Sigmoid colon (tissue), 7 donors: ENCODE measurements at regions of chr2 and their contacts with region 1.

Region 1: DNA sequence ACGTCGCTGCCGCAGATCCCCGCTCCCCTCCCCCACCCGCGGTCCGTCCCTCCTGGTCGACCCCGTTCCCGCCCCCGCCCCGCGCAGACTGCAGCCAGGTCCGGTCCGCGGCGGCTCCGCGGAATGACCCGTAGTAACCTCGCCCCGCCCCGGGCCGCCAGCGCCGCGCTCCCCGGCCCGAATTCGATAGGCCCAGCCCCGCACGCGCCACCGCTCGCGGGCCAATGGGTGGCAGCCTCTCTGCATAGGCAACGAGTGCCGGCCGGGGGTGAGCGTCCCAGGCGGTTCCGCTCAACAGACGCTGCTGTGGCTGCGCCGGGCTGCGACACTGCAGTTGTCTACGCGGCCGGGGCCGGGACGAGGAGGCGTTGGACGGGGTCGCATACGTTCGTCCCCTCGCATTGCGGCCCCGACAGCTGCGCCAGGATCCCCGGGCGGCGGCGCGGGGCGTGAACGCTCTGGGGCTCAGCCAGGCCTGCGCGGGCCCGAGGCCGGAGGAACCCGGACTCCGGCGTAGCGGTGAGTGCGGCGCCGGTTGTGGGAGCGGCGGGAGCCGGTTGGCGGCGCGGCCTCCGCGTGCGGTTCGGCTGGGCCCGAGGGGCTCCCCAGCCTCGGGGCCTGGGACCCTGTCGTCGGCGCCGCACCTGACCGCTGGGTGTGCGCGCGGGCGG is at the start of gene ACSL3:
- DNase-seq: peak; percentile 98
- H3K4me3 ChIP-seq: peak within 1 kb of the TSS; percentile 66 to 95 (median 76)
- H3K27ac ChIP-seq: peak within 1 kb of the TSS; percentile 89 to 98 (median 97)
- H3K4me1 ChIP-seq: peaks cover 0 to 46% (median 45%) of the 10 kb centered on the region in 4 donors
- H3K27me3 ChIP-seq: no peaks in the 10 kb centered on the region
- CTCF ChIP-seq: no peak
- EP300 ChIP-seq: peak in 1 of 4 donors; percentile 9
- POLR2A ChIP-seq: peak; percentile 96 to 97
- total RNA-seq, gene ACSL3: 44.0 to 75.7 (median 54.8) TPM

Region 2: GRCh38 chr2:222655787-222656525 is 204.9 kb before region 1 on chr2 and contains the start of gene FARSB:
- intact Hi-C with region 1: loop called (anchors 5 kb)
- DNase-seq: peak; percentile 97
- H3K4me3 ChIP-seq: peak within 1 kb of the TSS; percentile 56 to 93 (median 82)
- H3K27ac ChIP-seq: peak within 1 kb of the TSS; percentile 79 to 87 (median 84)
- H3K4me1 ChIP-seq: peaks cover 0 to 30% (median 20%) of the 10 kb centered on the region in 4 donors
- H3K27me3 ChIP-seq: no peaks in the 10 kb centered on the region
- CTCF ChIP-seq: no peak
- EP300 ChIP-seq: no peak
- POLR2A ChIP-seq: peak in 1 of 2 donors; percentile 63
- total RNA-seq, gene FARSB: 8.3 to 15.6 (median 15.3) TPM

Region 3: DNA sequence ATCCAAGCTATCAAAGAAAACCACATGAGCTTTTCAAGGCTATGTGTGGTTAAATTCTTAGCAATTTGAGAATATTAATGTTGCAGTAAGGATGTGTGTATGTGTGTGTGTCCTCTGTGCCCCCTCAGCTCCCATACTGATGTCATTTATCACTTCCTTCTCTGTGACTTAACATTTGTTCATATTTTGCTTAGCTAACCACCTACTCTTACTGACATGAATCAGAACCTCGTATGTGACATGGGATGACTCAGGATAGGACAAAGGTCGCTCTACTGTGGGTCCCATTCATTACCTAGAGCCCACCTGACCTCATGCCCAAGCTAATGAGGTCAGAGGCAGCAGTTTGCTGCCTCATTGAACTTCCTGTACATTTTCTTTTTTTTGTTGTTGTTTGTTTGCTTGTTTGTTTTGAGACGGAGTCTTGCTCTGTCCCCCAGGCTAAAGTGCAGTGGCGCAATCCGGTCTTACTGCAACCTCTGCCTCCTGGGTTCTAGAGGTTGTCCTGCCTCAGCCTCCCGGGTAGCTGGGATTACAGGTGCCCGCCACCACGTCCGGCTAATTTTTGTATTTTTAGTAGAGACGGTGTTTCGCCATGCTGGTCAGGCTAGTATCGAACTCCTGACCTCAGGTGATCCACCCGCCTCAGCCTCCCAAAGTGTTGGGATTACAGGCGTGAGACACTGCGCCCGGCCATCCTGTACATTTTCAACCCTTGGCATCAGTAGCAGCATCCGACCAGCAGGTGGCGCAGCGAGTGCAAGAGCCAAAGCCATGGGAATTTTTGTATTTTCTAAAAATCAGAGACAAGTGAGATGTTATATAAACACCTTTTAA is 153.0 kb before region 1 on chr2:
- intact Hi-C with region 1: loop called (anchors 2 kb)
- DNase-seq: peak; percentile 87
- H3K4me3 ChIP-seq: no peak overlapping the region
- H3K27ac ChIP-seq: no peak overlapping the region
- H3K4me1 ChIP-seq: peaks cover 0 to 25% (median 19%) of the 10 kb centered on the region in 4 donors
- H3K27me3 ChIP-seq: no peaks in the 10 kb centered on the region
- CTCF ChIP-seq: peak; percentile 91 to 98 (median 94)
- EP300 ChIP-seq: no peak
- POLR2A ChIP-seq: no peak

Region 4: GRCh38 chr2:222797261-222797660 is 63.6 kb before region 1 on chr2:
- intact Hi-C with region 1: loop called (anchors 5 kb)
- DNase-seq: no peak
- H3K4me3 ChIP-seq: no peak overlapping the region
- H3K27ac ChIP-seq: no peak overlapping the region
- H3K4me1 ChIP-seq: peaks cover 0 to 19% (median 11%) of the 10 kb centered on the region in 4 donors
- H3K27me3 ChIP-seq: no peaks in the 10 kb centered on the region
- CTCF ChIP-seq: peak in 2 of 4 experiments; percentile 45 to 49
- EP300 ChIP-seq: no peak
- POLR2A ChIP-seq: no peak

Region 5: DNA sequence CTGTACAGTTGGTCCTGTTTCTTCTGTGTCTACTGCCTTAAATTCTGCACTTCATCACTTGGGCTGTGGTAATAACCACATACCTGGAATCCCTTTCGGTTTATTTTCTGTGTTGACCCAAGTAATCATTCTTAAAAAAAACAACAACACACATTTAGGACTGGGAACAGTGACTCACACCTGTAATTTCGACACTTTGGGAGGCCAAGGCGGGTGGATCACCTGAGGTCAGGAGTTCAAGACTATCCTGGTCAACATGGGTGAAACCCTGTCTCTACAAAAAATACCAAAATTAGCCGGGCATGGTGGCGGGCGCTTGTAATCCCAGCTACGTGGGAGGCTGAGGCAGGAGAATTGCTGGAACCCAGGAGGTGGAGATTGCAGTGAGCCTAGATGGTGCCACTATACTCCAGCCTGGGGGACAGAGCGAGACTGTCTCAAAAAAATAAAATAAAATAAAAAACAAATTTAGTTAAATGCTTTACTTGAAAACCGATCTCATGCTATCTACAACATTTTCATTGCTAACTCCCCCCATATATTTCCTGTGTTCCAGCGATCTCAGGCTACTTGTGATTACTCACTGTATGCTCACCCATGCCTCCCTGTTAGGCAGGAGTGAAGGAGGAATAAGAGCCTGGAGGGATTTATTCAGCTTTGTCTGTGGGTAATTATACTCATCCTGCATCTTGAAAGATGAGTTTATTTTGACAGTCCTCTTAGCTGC is 18.2 kb after region 1 on chr2:
- intact Hi-C with region 1: loop called (anchors 2 kb)
- DNase-seq: no peak
- H3K4me3 ChIP-seq: no peak overlapping the region
- H3K27ac ChIP-seq: peak overlapping the region in 2 of 4 donors; percentile 17 to 36
- H3K4me1 ChIP-seq: peaks cover 0 to 31% (median 27%) of the 10 kb centered on the region in 4 donors
- H3K27me3 ChIP-seq: no peaks in the 10 kb centered on the region
- CTCF ChIP-seq: no peak
- EP300 ChIP-seq: no peak
- POLR2A ChIP-seq: no peak

Region 6: DNA sequence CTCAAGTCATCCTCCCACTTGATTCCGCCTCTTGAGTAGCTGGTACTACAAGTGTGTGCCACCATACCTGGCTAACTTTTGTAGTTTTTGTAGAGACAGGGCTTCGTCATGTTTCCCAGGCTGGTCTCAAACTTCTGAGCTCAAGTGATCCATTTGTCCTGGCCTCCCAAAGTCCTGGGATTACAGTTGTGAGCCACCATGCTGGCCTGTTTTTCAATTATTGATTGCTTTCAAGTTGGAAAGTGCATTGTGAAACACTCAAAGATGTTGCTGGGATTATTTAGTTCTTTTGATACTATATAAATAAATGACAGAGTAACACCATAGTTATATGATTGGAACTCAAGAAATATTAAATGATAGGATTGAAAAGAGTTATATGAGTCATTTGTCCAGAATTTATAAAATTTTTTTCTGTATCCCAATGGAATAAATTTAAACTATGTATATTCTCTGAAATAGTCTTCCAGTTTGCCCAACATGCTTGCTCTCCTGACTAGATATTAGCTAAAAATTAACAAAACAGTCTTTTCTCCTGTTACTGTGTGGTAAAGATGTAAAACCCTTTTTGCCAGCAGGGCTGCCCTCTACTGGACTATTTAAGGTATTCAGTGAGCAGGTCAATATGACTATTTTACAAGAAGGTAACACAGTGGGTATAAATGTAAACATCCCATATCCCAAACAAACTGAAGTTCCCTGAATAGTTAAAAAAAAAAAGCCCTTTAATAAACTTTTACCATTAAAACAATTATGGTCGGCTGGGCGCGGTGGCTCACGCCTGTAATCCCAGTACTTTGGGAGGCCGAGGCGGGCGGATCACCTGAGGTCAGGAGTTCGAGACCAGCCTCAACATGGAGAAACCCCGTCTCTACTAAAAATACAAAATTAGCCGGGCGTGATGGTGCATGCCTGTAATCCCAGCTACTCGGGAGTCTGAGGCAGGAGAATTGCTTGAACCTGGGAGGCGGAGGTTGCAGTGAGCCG is 42.7 kb after region 1 on chr2:
- intact Hi-C with region 1: loop called (anchors 5 kb)
- DNase-seq: no peak
- H3K4me3 ChIP-seq: no peak overlapping the region
- H3K27ac ChIP-seq: no peak overlapping the region
- H3K4me1 ChIP-seq: peaks cover 0 to 71% (median 61%) of the 10 kb centered on the region in 4 donors
- H3K27me3 ChIP-seq: no peaks in the 10 kb centered on the region
- CTCF ChIP-seq: peak; percentile 24 to 62 (median 56)
- EP300 ChIP-seq: no peak
- POLR2A ChIP-seq: no peak

Region 7: GRCh38 chr2:223041527-223042109 is 180.7 kb after region 1 on chr2:
- intact Hi-C with region 1: no loop called
- DNase-seq: peak; percentile 88
- H3K4me3 ChIP-seq: no peak overlapping the region
- H3K27ac ChIP-seq: peak overlapping the region in 2 of 4 donors; percentile 33 to 55
- H3K4me1 ChIP-seq: peaks cover 0 to 21% (median 11%) of the 10 kb centered on the region in 4 donors
- H3K27me3 ChIP-seq: no peaks in the 10 kb centered on the region
- CTCF ChIP-seq: no peak
- EP300 ChIP-seq: no peak
- POLR2A ChIP-seq: no peak